ENCODE measurements at regions of chr22 and their contacts with region 1.

Region 1: DNA sequence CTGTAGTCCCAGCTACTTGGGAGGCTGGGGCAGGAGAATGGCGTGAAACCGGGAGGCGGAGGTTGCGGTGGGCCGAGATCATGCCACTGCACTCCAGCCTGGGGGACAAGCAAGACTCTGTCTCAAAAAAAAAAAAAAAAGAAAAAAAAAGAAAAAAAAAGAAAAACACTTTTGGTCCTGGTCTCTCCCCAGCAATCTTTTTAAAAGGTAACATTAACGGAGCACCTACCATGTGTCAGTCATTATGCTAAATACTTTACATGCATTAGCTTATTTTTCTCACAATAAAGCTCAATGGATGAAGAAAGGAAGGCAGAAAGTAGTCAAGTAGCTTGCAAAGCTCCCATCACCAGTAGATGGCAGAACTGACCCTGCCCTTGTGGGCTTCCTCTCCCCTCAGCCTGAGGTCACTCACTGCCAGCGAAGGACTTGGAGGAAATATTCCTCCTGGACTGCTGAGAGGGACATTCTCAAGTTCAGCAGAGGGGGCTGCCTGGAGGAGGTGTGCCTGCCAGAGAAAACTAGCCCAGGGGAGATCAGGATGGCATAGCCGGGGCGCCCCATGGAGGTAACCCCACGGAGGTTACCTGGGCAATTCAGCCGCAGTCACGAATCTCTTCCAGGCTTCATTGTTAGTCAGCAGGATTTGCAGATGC is 15.5 kb downstream of the APOL3 start:
- DNase-seq: peak; percentile 65 to 75
- ATAC-seq: peak; percentile 81 to 92 (median 85)
- H3K4me3 ChIP-seq: no peak overlapping the region
- H3K27ac ChIP-seq: no peak overlapping the region
- H3K4me1 ChIP-seq: peaks cover 4% of the 10 kb centered on the region
- H3K27me3 ChIP-seq: no peaks in the 10 kb centered on the region
- CTCF ChIP-seq: peak; percentile 76

Region 2: GRCh38 chr22:36180038-36180880 is 35.2 kb after region 1 on chr22:
- intact Hi-C with region 1: loop called in 1 of 2 experiments (anchors 2 kb)
- DNase-seq: peak; percentile 86 to 90
- ATAC-seq: peak; percentile 83 to 95 (median 90)
- H3K4me3 ChIP-seq: no peak overlapping the region
- H3K27ac ChIP-seq: no peak overlapping the region
- H3K4me1 ChIP-seq: no peaks in the 10 kb centered on the region
- H3K27me3 ChIP-seq: no peaks in the 10 kb centered on the region
- CTCF ChIP-seq: peak; percentile 88

Region 3: DNA sequence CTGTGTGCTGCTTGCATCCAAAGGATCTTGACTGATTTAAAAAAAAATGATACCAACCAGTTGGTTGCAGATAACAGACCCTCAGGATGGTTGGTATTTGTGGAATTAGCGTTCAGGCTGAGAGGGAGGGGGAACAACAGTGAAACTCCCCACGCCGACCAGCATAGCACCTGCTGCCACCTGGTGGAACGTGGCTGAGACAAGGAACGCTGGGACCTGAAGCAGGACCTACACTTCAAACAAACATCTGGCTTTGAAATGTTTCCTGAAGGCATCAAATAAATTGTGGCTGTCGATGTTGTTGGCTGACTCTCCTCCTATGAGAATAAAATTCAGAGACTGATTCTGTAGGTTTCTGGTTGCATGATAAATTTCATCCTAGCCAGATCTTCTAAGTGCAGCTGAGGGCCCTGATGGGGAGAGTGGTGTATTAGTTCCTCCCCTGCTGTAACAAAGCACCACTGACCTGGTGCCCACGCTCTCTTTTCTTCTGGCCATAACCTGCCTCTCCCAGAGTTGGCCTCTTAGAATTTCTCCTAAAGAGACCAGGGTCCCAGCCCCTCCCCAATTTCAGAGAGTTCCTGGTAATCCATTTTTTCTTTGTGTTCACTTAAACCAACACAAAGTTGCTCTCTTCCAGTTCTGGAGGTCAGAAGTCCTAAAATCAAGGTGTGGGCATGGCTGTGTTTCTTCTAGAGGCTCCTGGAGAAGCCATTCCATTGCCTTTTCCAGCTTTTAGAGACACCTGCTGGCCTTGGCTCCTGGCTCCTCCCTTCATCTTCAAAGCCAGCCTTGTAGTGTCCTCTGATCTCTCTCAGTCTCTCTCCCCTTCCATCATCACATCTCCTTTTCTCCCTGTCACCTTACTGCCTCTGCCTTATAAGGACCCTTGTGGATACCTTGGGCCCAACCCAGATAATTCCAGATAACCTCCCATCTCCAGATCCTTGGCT is 77.1 kb after region 1 on chr22:
- intact Hi-C with region 1: loop called (anchors 2 to 10 kb)
- DNase-seq: peak; percentile 39 to 72
- ATAC-seq: peak in 3 of 4 donors; percentile 46 to 67 (median 47)
- H3K4me3 ChIP-seq: no peak overlapping the region
- H3K27ac ChIP-seq: no peak overlapping the region
- H3K4me1 ChIP-seq: peaks cover 28% of the 10 kb centered on the region
- H3K27me3 ChIP-seq: no peaks in the 10 kb centered on the region
- CTCF ChIP-seq: peak; percentile 65

Region 4: DNA sequence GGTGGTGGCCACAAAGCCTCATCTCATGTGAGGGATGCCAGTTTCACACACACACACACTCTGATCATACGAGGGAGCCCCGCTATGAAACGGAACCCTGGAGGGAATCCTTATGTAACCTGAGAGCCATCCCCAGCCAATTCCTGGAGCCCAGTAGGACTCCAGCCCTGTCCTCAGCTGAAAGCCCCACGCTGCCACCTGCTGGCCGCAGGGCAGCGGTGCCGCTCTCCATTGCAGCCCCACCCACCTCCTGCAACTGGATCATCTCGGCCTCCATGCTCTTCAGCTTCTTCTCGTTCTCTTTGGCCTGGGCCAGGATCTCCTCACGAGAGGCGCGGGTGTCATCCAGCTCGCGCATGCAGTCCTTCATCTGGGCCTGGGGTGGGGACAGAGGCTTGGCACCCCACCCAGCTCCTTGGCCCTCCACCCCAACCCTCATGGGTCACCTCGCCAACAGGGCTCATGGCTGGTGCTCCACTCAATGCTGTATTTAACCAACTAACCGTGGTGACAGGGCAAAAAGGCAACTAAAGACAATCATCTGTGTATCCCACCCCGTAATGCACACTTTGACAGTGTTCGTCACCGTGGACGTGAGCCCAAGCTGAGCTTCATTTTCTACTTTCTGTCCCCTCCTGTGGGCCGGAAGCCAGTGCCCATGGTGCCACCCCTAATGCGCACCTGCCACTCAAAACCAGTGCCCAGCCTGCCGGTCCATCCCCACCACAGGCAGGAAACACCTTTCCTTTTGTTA is 141.6 kb after region 1 on chr22:
- intact Hi-C with region 1: loop called (anchors 2 to 5 kb)
- DNase-seq: peak; percentile 83 to 90
- ATAC-seq: peak; percentile 86 to 95 (median 92)
- H3K4me3 ChIP-seq: no peak overlapping the region
- H3K27ac ChIP-seq: no peak overlapping the region
- H3K4me1 ChIP-seq: no peaks in the 10 kb centered on the region
- H3K27me3 ChIP-seq: no peaks in the 10 kb centered on the region
- CTCF ChIP-seq: peak; percentile 87

Measured in psoas muscle (tissue), 8 donors.